T-cell (primary cell): ENCODE measurements at regions of chrX and their contacts with region 1.

Region 1: DNA sequence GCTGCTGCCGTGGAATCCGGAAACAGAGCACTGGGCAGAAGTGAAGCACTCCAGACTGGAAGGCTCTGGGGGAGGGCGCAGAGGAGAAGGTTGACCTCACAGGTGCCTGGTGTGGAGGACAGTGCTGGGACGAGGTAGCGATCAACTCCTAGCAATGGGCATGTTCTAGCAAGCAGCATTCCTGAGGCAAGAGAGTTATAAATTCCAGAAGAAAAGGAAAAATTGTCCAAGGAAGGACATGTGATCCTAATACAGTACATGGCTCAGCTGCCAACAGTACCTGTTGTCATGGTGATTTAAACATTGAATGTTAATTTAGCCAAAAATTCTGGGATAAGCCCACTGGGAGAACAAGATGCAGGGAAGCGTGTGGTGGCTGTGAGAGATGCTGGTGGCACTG is 8.2 kb downstream of the ARHGAP4 start:
- DNase-seq: no peak
- ATAC-seq: no peak
- H3K4me3 ChIP-seq: no peak overlapping the region
- H3K4me3 Mint-ChIP-seq: no peak overlapping the region
- H3K27ac ChIP-seq: no peak overlapping the region
- H3K27ac Mint-ChIP-seq: no peak overlapping the region
- H3K4me1 ChIP-seq: peaks cover 0 to 33% of the 10 kb centered on the region in 2 experiments
- H3K4me1 Mint-ChIP-seq: peaks cover 15 to 31% (median 24%) of the 10 kb centered on the region in 3 donors
- H3K27me3 ChIP-seq: no peaks in the 10 kb centered on the region
- H3K27me3 Mint-ChIP-seq: peaks cover 0 to 24% of the 10 kb centered on the region in 2 donors

Region 2: GRCh38 chrX:154596290-154596929 is 678.5 kb after region 1 on chrX:
- CTCF ChIA-PET with region 1: no interaction called
- POLR2A ChIA-PET with region 1: interaction called in 1 of 2 experiments, 10 read pairs
- DNase-seq: peak in 8 of 35 experiments; percentile 4 to 13 (median 6)
- ATAC-seq: peak in 1 of 4 experiments; percentile 46
- H3K4me3 ChIP-seq: no peak overlapping the region
- H3K4me3 Mint-ChIP-seq: no peak overlapping the region
- H3K27ac ChIP-seq: no peak overlapping the region
- H3K27ac Mint-ChIP-seq: no peak overlapping the region
- H3K4me1 ChIP-seq: peaks cover 0 to 8% of the 10 kb centered on the region in 2 experiments
- H3K4me1 Mint-ChIP-seq: peaks cover 0 to 11% (median 5%) of the 10 kb centered on the region in 3 donors
- H3K27me3 ChIP-seq: peaks cover 0 to 7% of the 10 kb centered on the region in 2 experiments
- H3K27me3 Mint-ChIP-seq: peaks cover 3 to 25% of the 10 kb centered on the region in 2 donors